ENCODE measurements at regions of chr22 and their contacts with region 1.

Region 1: DNA sequence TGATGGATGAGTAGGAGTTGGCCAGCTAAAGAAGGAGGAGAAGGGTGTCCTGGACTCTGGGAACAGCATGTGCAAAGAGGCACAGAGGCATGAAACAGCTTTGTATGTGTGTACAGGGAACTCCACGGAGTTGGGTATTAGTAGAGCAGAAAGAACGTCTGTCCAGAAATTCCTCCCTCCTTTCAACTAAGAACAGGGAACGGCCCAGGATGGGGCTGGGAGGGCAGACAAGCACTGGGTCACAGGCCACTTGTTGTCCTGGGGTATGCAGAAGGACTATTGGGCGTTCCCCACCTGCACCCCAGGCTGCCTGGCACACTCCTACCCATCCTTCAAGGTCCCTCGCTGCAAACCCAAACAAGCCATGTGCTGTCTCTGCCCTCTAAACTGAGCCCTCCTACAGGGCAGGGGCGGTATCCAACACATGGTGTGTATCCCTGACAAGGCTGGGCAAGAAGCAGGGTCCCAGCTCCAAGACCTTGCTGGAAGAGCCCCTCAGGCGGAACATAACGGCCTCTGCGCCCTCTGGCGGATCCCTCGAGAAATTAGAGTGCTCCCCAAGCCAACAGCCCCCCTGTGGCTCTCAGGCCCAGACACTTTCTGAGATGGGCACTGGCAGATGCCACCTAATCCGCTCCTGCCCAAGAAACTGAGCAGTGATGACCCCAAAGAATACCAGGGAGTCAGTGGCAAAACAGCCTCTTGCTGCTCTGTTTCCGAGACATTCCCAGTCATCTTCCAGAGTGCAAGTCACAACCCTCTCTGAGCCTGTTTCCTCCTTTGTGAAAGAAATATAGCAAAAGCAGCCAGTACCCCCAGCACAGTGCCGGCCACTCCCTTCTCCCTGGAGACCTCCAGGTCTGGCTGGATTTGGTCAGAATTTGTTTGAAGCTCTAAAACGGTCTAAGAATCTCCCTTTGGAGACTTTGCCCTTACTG is 1.6 kb upstream of the ELFN2 start:
- DNase-seq: peak; percentile 56
- H3K4me3 ChIP-seq: no peak overlapping the region
- H3K27ac ChIP-seq: no peak overlapping the region
- H3K4me1 ChIP-seq: peaks cover 24% of the 10 kb centered on the region
- H3K27me3 ChIP-seq: peaks cover 0 to 8% of the 10 kb centered on the region in 2 experiments
- CTCF ChIP-seq: peak; percentile 64 to 83
- POLR2A ChIP-seq: no peak

Region 2: GRCh38 chr22:37282385-37282677 is 146.6 kb before region 1 on chr22 and contains the start of gene CYTH4:
- CTCF ChIA-PET with region 1: no interaction called
- POLR2A ChIA-PET with region 1: no interaction called
- dilution Hi-C with region 1: no loop called
- intact Hi-C with region 1: no loop called
- DNase-seq: peak; percentile 28
- H3K4me3 ChIP-seq: no peak within 1 kb of the TSS
- H3K27ac ChIP-seq: no peak within 1 kb of the TSS
- H3K4me1 ChIP-seq: peaks cover 10% of the 10 kb centered on the region
- H3K27me3 ChIP-seq: no peaks in the 10 kb centered on the region
- CTCF ChIP-seq: no peak
- POLR2A ChIP-seq: no peak
- total RNA-seq, gene CYTH4: not detected in 2 replicates

Region 3: DNA sequence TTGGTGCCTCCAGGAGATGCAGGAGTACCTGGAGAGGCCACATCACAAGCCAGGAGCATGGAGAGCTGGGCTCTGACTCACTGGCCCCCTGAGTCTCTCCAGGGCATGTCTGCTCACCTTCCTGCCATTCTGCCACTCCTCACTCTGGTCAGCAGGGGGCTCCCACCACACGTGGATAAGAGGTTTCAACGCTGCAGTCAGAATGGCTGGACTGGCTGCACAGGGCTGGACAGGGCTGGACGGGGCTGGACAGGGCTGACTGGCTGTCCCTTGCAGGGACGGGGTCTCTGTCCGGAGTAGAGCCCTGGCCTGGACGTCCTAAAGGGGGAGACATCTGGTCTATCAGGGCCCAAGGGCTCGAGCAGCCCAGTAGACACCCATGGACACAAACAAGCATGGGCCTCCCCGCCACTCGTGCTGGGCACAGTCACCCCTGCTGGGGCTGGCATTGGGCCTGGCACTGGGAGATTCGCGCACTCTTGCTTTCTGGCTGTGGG is 112.0 kb before region 1 on chr22:
- CTCF ChIA-PET with region 1: interaction called, 75 read pairs
- POLR2A ChIA-PET with region 1: no interaction called
- dilution Hi-C with region 1: no loop called
- intact Hi-C with region 1: loop called (anchors 1 kb)
- DNase-seq: peak; percentile 82
- H3K4me3 ChIP-seq: no peak overlapping the region
- H3K27ac ChIP-seq: no peak overlapping the region
- H3K4me1 ChIP-seq: peaks cover 6% of the 10 kb centered on the region
- H3K27me3 ChIP-seq: no peaks in the 10 kb centered on the region
- CTCF ChIP-seq: peak; percentile 93
- POLR2A ChIP-seq: no peak

Region 4: DNA sequence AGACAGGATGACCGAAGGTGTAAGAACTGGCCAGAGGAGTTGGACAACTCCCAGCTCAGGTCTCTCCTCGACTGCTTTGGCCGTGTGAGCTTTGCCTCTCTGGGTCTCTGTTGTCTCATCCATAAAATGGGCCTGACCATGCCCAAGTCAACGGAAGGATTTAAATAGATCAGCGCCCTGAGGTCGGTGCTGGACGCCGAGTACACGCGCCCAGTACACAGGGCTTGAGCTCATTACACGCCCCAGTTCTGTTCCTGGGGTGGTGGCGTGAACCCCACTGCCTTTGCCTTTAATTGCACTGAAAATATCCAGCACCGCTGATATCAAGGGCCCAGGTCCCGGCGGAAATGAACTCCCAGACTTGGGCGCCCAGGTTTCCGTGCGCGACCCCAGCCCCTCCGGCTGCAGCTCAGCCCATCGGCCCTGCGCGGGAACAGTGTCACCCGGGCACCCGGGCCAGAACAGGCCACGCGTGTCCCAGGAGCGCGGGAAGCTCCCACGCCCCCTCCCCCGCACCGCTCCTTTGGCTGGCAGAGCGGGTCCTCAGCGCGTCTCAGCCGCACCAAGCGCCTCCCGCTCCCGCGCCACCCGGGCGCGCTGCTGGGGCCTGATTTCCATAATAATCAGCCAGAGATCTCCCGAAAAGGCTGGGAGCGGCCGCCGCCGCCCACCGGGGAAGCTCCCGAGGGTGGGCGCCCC is 104.4 kb before region 1 on chr22:
- CTCF ChIA-PET with region 1: interaction called, 33 read pairs
- POLR2A ChIA-PET with region 1: no interaction called
- dilution Hi-C with region 1: no loop called
- intact Hi-C with region 1: no loop called
- DNase-seq: no peak
- H3K4me3 ChIP-seq: no peak overlapping the region
- H3K27ac ChIP-seq: no peak overlapping the region
- H3K4me1 ChIP-seq: peaks cover 29% of the 10 kb centered on the region
- H3K27me3 ChIP-seq: peaks cover 0 to 5% of the 10 kb centered on the region in 2 experiments
- CTCF ChIP-seq: no peak
- POLR2A ChIP-seq: no peak